ENCODE measurements at regions of chr1 and their contacts with region 1.

Region 1: GRCh38 chr1:10398734-10399623 is at the start of gene PGD:
- DNase-seq: peak; percentile 96 to 98
- ATAC-seq: peak; percentile 90 to 93
- H3K4me3 ChIP-seq: peak within 1 kb of the TSS; percentile 71 to 99 (median 87)
- H3K27ac ChIP-seq: peak within 1 kb of the TSS; percentile 82 to 93 (median 92)
- H3K4me1 ChIP-seq: peaks cover 0 to 21% of the 10 kb centered on the region in 2 donors
- H3K27me3 ChIP-seq: no peaks in the 10 kb centered on the region
- CTCF ChIP-seq: peak in 1 of 5 experiments; percentile 15
- POLR2A ChIP-seq: peak; percentile 67 to 81
- total RNA-seq, gene PGD: 23.8 to 48.7 (median 39.3) TPM

Region 2: DNA sequence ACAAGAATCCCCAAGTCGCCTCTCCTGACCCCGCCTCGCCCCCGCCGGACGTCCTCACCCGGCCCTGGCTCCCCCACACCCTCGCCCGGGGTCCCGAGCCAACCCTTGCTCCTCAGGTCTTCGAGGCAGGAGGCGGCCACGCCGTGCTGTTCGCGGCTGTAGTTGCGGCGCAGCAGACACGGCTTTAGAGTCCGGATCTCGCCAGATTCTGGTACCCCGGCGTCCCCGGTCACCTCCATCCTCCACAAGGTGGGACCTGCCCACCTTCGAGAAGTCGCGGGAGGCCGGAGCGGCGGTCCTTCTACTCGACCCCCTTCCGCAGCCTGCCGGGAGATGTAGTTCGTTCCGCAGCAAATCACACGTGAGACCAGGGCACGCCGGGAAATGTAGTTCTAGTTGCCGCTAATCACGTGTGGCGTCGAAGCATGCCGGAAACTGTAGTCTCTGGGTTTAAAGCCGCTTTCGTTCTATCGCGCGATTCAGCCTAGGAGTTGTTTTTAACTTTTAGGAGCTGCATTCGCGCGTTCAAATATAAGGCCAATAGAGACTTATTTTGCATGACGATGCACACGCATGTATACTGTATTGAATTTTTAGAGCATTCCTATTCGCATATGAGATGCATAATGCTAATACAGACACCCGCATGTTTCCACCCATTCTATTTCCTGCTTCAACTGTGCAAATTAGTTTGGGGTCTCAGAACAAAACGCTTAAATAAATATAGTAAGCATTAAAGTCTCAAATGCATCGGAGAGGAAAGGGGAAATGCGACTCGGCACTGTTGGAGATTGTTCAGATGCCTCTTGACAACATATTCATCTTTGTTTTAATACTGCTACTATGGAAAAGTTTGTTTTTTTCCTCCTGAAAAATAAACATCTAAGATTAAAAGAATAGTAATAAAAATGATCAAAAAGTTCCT is 73.5 kb after region 1 on chr1 and contains the start of gene DFFA:
- in situ Hi-C with region 1: no loop called
- intact Hi-C with region 1: loop called (anchors 2 kb)
- DNase-seq: peak; percentile 91 to 92
- ATAC-seq: peak; percentile 95
- H3K4me3 ChIP-seq: peak within 1 kb of the TSS; percentile 75 to 96 (median 87)
- H3K27ac ChIP-seq: peak within 1 kb of the TSS; percentile 65 to 84 (median 78)
- H3K4me1 ChIP-seq: peaks cover 30 to 31% of the 10 kb centered on the region in 2 donors
- H3K27me3 ChIP-seq: no peaks in the 10 kb centered on the region
- CTCF ChIP-seq: no peak
- POLR2A ChIP-seq: peak; percentile 61 to 62
- total RNA-seq, gene DFFA: 13.8 to 15.6 (median 14.5) TPM